Mammary epithelial cell (primary cell): ENCODE measurements at regions of chr5 and their contacts with region 1.

Region 1: GRCh38 chr5:65861830-65862241 is 64.5 kb upstream of the ERBIN start:
- DNase-seq: peak; percentile 93
- H3K4me3 ChIP-seq: no peak overlapping the region
- H3K27ac ChIP-seq: peak overlapping the region; percentile 89
- H3K4me1 ChIP-seq: peaks cover 26% of the 10 kb centered on the region
- H3K27me3 ChIP-seq: no peaks in the 10 kb centered on the region
- CTCF ChIP-seq: no peak

Region 2: DNA sequence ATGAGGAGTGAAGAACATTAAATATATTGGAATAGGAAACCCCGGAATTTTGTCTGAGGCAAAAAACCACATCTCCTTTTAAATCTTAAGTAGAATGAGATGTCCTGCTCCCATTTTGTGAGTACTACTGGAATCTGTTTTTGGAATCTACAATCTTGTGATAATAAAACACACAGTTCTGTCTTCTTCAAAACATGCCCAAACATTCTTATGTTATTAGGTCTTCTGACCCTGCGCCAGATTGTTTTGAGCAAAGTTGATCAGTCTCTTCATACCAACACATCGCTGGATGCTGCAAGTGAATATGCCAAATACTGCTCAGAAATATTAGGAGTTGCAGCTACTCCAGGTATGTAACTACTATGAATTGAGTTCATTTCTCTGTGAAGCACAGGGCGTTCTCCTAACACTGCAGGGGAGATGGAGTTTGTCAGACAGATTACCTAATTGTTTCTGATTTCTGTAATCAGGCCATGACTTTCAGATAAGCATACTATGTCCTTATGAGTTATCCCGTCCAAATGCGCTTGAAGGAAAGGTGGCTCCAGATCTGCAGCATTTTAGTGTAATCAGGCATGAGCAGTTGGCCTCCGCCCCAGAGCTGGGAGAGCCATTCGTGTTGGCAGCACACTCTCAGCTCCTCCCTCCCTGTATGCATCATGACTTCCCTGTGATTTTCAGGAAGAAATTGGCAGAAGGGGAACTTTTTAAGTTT is 51.9 kb before region 1 on chr5:
- CTCF ChIA-PET with region 1: no interaction called
- dilution Hi-C with region 1: loop called (anchors 5 kb)
- in situ Hi-C with region 1: no loop called
- intact Hi-C with region 1: no loop called
- DNase-seq: no peak
- H3K4me3 ChIP-seq: no peak overlapping the region
- H3K27ac ChIP-seq: no peak overlapping the region
- H3K4me1 ChIP-seq: peaks cover 28% of the 10 kb centered on the region
- H3K27me3 ChIP-seq: no peaks in the 10 kb centered on the region
- CTCF ChIP-seq: no peak

Region 3: DNA sequence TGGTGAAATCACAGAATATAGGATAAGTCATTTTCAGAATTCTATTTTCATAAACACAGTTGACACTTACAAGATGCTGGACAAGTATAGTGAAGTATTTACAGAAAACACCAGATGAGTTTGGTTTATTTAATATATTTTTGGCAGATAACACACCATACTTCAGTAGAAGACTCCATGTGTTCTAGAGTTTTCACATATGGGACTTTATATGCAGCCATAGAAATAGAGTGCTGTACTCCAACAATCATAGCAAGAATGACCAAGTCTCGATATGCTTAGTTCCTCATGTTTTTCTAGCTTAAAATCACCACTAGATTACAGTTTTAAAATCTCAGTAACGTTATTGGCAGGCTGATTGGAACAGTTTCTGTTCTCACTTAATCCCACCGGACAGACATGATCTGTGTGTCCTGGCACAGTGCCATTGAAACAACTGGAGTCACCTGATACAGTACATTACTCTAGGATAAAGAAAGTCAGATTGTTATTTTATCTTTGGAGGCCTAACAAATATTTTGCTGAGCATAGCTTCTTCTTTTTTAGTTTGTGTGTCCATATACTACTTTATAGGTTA is 18.7 kb after region 1 on chr5:
- CTCF ChIA-PET with region 1: interaction called, 12 read pairs
- dilution Hi-C with region 1: no loop called
- in situ Hi-C with region 1: no loop called
- intact Hi-C with region 1: no loop called
- DNase-seq: no peak
- H3K4me3 ChIP-seq: no peak overlapping the region
- H3K27ac ChIP-seq: no peak overlapping the region
- H3K4me1 ChIP-seq: peaks cover 9% of the 10 kb centered on the region
- H3K27me3 ChIP-seq: no peaks in the 10 kb centered on the region
- CTCF ChIP-seq: no peak